Naive thymus-derived CD4-positive, alpha-beta T cell (primary cell): ENCODE measurements at regions of chr7 and their contacts with region 1.

Region 1: DNA sequence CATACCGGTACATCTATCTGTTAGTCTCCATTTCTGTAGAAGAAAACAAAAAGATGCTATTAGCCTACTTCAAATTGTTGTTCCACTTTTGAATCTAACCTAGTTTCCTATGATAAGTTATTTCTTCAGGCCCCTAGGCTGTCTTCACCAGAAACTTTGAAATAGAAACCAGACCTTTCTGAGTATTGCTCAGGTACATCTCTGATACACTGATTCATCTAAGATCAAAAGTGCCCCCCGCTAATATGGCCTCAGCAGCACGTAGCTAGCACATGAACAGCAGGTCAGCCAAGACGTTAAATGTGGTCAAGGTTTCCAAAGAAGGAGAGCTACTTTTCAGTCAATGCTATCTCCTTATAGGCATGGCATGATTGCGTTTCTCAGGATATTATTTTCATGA is 23.6 kb downstream of the CTAGE6 start:
- DNase-seq: no peak
- ATAC-seq: no peak
- H3K4me3 ChIP-seq: no peak overlapping the region
- H3K4me3 Mint-ChIP-seq: no peak overlapping the region
- H3K27ac ChIP-seq: no peak overlapping the region
- H3K27ac Mint-ChIP-seq: no peak overlapping the region
- H3K4me1 ChIP-seq: peaks cover 0 to 5% of the 10 kb centered on the region in 2 donors
- H3K4me1 Mint-ChIP-seq: peaks cover 5 to 14% (median 6%) of the 10 kb centered on the region in 7 donors
- H3K27me3 ChIP-seq: no peaks in the 10 kb centered on the region
- H3K27me3 Mint-ChIP-seq: no peaks in the 10 kb centered on the region

Region 2: GRCh38 chr7:144027070-144027469 is 293.2 kb after region 1 on chr7:
- CTCF ChIA-PET with region 1: no interaction called
- POLR2A ChIA-PET with region 1: no interaction called
- intact Hi-C with region 1: loop called in 1 of 2 experiments (anchors 5 kb)
- DNase-seq: peak in 1 of 9 donors; percentile 1
- ATAC-seq: no peak
- H3K4me3 ChIP-seq: no peak overlapping the region
- H3K4me3 Mint-ChIP-seq: no peak overlapping the region
- H3K27ac ChIP-seq: no peak overlapping the region
- H3K27ac Mint-ChIP-seq: no peak overlapping the region
- H3K4me1 ChIP-seq: no peaks in the 10 kb centered on the region
- H3K4me1 Mint-ChIP-seq: no peaks in the 10 kb centered on the region
- H3K27me3 ChIP-seq: no peaks in the 10 kb centered on the region
- H3K27me3 Mint-ChIP-seq: peaks cover 0 to 18% (median 8%) of the 10 kb centered on the region in 5 donors